Esophagus squamous epithelium (tissue), 5 donors: ENCODE measurements at regions of chr2 and their contacts with region 1.

Region 1: DNA sequence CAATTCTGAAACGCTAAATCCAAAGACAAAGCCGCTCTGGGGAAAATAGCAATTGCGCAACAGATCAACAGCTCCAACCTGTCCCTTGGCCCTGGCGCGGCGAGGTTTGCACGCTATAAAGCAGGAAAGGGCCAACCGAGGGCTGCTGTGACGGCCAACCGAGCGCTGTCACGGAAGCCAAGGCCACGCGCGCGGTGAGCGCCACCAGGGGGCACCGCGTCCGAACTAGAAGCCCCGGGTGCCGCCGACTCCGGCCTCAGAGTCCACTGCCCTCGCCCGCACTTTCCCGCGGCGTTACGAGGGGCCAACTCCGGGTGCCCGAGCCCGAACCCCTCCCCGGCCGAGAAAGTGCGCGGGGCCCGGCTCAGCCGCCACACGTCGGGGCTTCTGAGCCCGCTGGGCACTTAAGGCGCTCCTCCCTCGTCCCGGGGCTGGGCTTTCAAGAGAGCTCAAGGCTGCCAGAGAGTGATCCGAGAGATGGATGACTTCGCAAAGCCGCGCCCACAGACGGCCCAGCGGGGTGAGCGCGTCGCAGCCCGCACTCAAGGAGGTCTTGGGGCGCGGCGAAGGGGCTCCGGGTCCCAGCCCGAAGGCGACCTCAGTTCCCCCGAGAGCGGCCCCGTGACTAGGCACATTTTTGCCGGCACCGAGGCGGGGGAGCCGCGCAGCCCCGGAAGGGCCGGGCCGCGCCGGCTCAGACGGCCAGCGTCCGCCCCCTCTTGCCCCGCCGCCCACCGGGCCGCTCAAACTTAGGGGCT is 897 bp downstream of the NFE2L2 start:
- DNase-seq: peak; percentile 85
- H3K4me3 ChIP-seq: peak overlapping the region; percentile 71 to 99 (median 80)
- H3K27ac ChIP-seq: peak overlapping the region; percentile 98 to 100 (median 99)
- H3K4me1 ChIP-seq: peaks cover 27 to 68% (median 38%) of the 10 kb centered on the region in 3 donors
- H3K27me3 ChIP-seq: no peaks in the 10 kb centered on the region
- CTCF ChIP-seq: peak; percentile 74 to 95 (median 90)
- POLR2A ChIP-seq: peak in 3 of 4 donors; percentile 54 to 80 (median 59)

Region 2: GRCh38 chr2:177325270-177325929 is 61.8 kb after region 1 on chr2:
- intact Hi-C with region 1: loop called (anchors 5 kb)
- DNase-seq: no peak
- H3K4me3 ChIP-seq: no peak overlapping the region
- H3K27ac ChIP-seq: peak overlapping the region; percentile 1 to 64 (median 56)
- H3K4me1 ChIP-seq: peaks cover 20 to 62% (median 21%) of the 10 kb centered on the region in 3 donors
- H3K27me3 ChIP-seq: no peaks in the 10 kb centered on the region
- CTCF ChIP-seq: no peak
- POLR2A ChIP-seq: no peak